ENCODE measurements at regions of chr5 and their contacts with region 1.

Region 1: GRCh38 chr5:148730943-148731861 is 76.9 kb upstream of the HTR4 start:
- DNase-seq: peak; percentile 95
- H3K4me3 Mint-ChIP-seq: no peak overlapping the region
- H3K27ac Mint-ChIP-seq: peak overlapping the region; percentile 62
- H3K4me1 Mint-ChIP-seq: peaks cover 52% of the 10 kb centered on the region
- H3K27me3 Mint-ChIP-seq: no peaks in the 10 kb centered on the region
- CTCF ChIP-seq: peak; percentile 99

Region 2: DNA sequence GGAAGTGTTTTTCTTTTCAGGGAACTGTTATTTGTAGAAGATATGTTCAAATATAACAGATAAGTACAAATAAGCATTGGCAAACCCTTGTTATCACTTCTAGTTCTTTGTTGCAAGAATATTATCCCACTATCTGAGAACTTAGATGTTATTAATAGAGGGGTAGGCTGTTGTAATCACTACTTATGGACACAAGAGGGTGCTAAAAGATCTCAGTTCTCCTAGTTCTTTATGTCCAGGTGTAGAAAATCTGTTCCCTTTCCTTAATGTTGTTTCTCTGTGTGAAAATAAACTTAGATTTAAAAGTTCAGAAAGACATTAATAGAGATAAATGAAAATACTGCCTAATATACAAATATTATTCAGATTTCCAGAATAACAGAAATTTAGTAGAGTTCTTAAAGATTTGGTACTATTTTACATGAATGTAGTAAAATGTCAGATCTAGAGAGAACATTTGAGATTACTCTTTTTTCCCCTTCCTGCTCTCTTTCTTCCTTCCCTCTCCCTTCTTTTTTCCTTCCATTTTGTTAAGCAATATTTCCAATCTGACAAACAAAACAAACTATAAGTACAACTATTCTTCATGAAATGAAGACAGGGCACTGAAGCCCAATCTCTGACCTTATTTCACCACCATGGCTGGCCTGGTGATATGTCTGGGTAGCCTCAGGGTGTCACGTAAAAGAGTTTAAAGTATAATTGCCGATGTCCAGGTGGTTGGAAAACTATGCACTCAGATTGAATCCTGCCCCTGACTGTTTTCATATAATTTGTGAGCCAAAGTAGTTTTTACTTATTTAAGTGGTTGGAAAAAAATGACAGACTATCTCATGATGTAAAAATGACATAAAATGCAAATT is 781.3 kb before region 1 on chr5:
- CTCF ChIA-PET with region 1: interaction called, 5 read pairs
- POLR2A ChIA-PET with region 1: no interaction called
- intact Hi-C with region 1: loop called (anchors 10 kb)
- DNase-seq: peak; percentile 73
- H3K4me3 Mint-ChIP-seq: no peak overlapping the region
- H3K27ac Mint-ChIP-seq: peak overlapping the region; percentile 54
- H3K4me1 Mint-ChIP-seq: peaks cover 5% of the 10 kb centered on the region
- H3K27me3 Mint-ChIP-seq: no peaks in the 10 kb centered on the region
- CTCF ChIP-seq: peak; percentile 86

Region 3: GRCh38 chr5:148397968-148398597 is 333.1 kb before region 1 on chr5:
- CTCF ChIA-PET with region 1: interaction called, 11 read pairs
- POLR2A ChIA-PET with region 1: no interaction called
- intact Hi-C with region 1: no loop called
- DNase-seq: peak; percentile 77
- H3K4me3 Mint-ChIP-seq: no peak overlapping the region
- H3K27ac Mint-ChIP-seq: peak overlapping the region; percentile 9
- H3K4me1 Mint-ChIP-seq: peaks cover 13% of the 10 kb centered on the region
- H3K27me3 Mint-ChIP-seq: no peaks in the 10 kb centered on the region
- CTCF ChIP-seq: no peak

Region 4: DNA sequence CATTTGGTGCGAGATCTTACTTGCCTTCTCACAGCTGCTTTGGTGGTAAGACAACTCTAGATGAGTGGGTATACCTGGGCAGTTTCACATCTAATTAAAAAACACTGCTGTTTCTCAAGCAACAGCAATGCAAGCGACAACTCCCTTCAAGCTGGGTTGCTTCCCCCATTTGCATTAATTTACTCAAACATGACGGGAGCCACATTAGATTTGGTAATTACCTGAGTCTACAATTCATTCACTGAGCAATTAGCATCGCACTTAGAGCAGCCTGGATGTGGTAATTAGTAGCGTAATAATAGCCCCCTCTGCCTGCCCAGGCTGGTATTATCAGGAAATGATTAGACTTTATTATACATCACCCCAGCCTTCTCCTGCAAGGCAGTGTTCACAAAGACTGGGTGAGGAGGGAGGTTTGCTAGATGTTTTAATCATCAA is 274.0 kb before region 1 on chr5:
- CTCF ChIA-PET with region 1: interaction called, 924 read pairs
- POLR2A ChIA-PET with region 1: interaction called, 8 read pairs
- intact Hi-C with region 1: no loop called
- DNase-seq: peak; percentile 60
- H3K4me3 Mint-ChIP-seq: no peak overlapping the region
- H3K27ac Mint-ChIP-seq: no peak overlapping the region
- H3K4me1 Mint-ChIP-seq: no peaks in the 10 kb centered on the region
- H3K27me3 Mint-ChIP-seq: peaks cover 45% of the 10 kb centered on the region
- CTCF ChIP-seq: peak; percentile 52

Region 5: GRCh38 chr5:148820461-148821395 is 89.5 kb after region 1 on chr5:
- CTCF ChIA-PET with region 1: interaction called, 43 read pairs
- POLR2A ChIA-PET with region 1: interaction called, 6 read pairs
- intact Hi-C with region 1: no loop called
- DNase-seq: peak; percentile 63
- H3K4me3 Mint-ChIP-seq: no peak overlapping the region
- H3K27ac Mint-ChIP-seq: no peak overlapping the region
- H3K4me1 Mint-ChIP-seq: peaks cover 5% of the 10 kb centered on the region
- H3K27me3 Mint-ChIP-seq: no peaks in the 10 kb centered on the region
- CTCF ChIP-seq: peak; percentile 84

Region 6: GRCh38 chr5:149018909-149019443 is 287.8 kb after region 1 on chr5:
- CTCF ChIA-PET with region 1: interaction called, 903 read pairs
- POLR2A ChIA-PET with region 1: no interaction called
- intact Hi-C with region 1: no loop called
- DNase-seq: no peak
- H3K4me3 Mint-ChIP-seq: no peak overlapping the region
- H3K27ac Mint-ChIP-seq: no peak overlapping the region
- H3K4me1 Mint-ChIP-seq: peaks cover 12% of the 10 kb centered on the region
- H3K27me3 Mint-ChIP-seq: no peaks in the 10 kb centered on the region
- CTCF ChIP-seq: no peak

Region 7: DNA sequence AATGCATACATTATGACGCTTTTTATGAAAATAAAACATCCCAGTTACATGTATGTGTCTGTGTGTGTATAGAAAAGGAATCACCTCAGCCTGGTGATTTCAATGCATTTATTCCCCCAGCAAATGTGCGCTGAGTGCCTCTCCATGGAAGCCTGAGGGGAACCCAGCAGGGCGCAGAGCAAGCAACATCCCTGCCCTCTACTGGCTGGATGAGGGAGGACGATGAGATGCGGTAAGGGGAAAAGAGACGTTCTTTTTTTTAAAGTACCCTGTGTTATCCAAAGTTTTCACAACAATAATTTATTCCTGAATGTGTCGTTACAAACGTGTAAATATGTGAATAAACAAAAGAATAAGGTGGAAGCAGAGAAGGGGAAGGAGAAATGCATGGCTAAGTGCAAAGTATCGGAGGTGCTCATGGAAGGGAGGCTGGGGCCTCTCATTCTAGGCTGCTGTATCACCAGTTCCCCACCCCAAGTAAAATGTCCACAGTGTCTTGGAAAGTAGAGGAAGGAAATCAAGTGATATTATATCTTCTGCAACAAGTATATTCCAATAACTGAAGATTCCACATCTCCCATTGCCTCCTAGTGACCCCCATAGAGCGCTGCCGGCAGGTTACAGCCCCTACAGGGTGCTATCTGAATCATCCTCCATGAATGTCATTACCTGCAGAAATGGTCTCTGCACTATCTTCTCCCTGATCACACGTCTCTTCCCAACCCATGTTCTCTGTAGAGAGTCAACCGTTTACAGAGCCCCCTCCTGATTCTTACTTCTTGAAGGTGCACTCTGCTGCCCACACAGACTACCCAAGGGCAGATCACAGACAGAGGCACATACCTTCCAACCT is 397.0 kb after region 1 on chr5:
- CTCF ChIA-PET with region 1: interaction called, 732 read pairs
- POLR2A ChIA-PET with region 1: no interaction called
- intact Hi-C with region 1: no loop called
- DNase-seq: peak; percentile 80
- H3K4me3 Mint-ChIP-seq: peak overlapping the region; percentile 67
- H3K27ac Mint-ChIP-seq: peak overlapping the region; percentile 84
- H3K4me1 Mint-ChIP-seq: peaks cover 73% of the 10 kb centered on the region
- H3K27me3 Mint-ChIP-seq: no peaks in the 10 kb centered on the region
- CTCF ChIP-seq: peak; percentile 87